Activated CD4-positive, alpha-beta memory T cell treated with anti-CD3 and anti-CD28 coated beads, Interleukin-2, amount 10 ng/mL, durations not matched to agents 7 days and 5 days (primary cell): ENCODE measurements at regions of chr15 and their contacts with region 1.

Region 1: DNA sequence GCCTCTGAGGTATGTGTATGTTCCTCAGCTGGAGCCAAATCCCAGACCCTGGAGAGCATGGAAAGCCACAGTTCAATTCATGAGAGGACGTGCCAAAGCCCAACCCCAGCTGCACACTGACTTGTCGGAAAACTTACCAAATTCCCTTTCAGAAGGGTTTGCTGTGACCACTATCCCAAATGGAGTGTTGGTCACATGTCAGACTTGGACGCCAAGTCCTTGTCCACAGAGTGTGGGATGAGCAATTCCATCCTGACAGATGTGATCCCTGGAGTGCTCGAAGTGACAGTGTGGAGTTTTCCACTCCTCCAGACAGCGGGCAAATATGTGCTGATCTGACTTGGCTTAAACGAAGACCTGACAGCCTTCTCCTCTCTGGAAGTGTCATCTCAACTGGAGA is 71.2 kb downstream of the RORA start:
- DNase-seq: no peak
- H3K4me3 Mint-ChIP-seq: no peak overlapping the region
- H3K27ac Mint-ChIP-seq: no peak overlapping the region
- H3K4me1 Mint-ChIP-seq: no peaks in the 10 kb centered on the region
- H3K27me3 Mint-ChIP-seq: peaks cover 45% of the 10 kb centered on the region

Region 2: GRCh38 chr15:61169904-61170695 is 12.2 kb after region 1 on chr15:
- CTCF ChIA-PET with region 1: interaction called, 11 read pairs
- POLR2A ChIA-PET with region 1: interaction called, 5 read pairs
- DNase-seq: peak; percentile 66
- H3K4me3 Mint-ChIP-seq: peak overlapping the region; percentile 23
- H3K27ac Mint-ChIP-seq: peak overlapping the region; percentile 48
- H3K4me1 Mint-ChIP-seq: peaks cover 25% of the 10 kb centered on the region
- H3K27me3 Mint-ChIP-seq: peaks cover 15% of the 10 kb centered on the region